ENCODE measurements at regions of chr15 and their contacts with region 1.

Region 1: GRCh38 chr15:76150971-76151598 is 91.3 kb downstream of the TMEM266 start:
- DNase-seq: peak; percentile 89
- H3K4me3 ChIP-seq: peak overlapping the region in 1 of 2 experiments; percentile 32; a peak in 1 of 4 replicates
- H3K27ac ChIP-seq: no peak overlapping the region; a peak in 1 of 4 replicates
- H3K4me1 ChIP-seq: peaks cover 5 to 6% of the 10 kb centered on the region in 2 experiments; a peak in 1 of 4 replicates
- H3K27me3 ChIP-seq: no peaks in the 10 kb centered on the region; the same call in 1 of the 2 replicates
- CTCF ChIP-seq: peak; percentile 87
- EP300 ChIP-seq: no peak
- RAD21 ChIP-seq: peak; percentile 66

Region 2: GRCh38 chr15:76057332-76058000 is 93.6 kb before region 1 on chr15:
- CTCF ChIA-PET with region 1: interaction called, 322 read pairs
- POLR2A ChIA-PET with region 1: no interaction called
- DNase-seq: peak; percentile 59
- H3K4me3 ChIP-seq: peak overlapping the region in 1 of 2 experiments; percentile 55; a peak in 1 of 4 replicates
- H3K27ac ChIP-seq: no peak overlapping the region
- H3K4me1 ChIP-seq: peaks cover 5 to 11% of the 10 kb centered on the region in 2 experiments; a peak in 3 of 4 replicates
- H3K27me3 ChIP-seq: peaks cover 31% of the 10 kb centered on the region
- CTCF ChIP-seq: peak; percentile 81
- EP300 ChIP-seq: no peak
- RAD21 ChIP-seq: peak; percentile 68

Region 3: GRCh38 chr15:76163475-76163881 is 12.4 kb after region 1 on chr15:
- CTCF ChIA-PET with region 1: interaction called, 279 read pairs
- POLR2A ChIA-PET with region 1: no interaction called
- DNase-seq: peak; percentile 50
- H3K4me3 ChIP-seq: no peak overlapping the region
- H3K27ac ChIP-seq: no peak overlapping the region
- H3K4me1 ChIP-seq: peaks cover 0 to 14% of the 10 kb centered on the region in 2 experiments; a peak in 1 of 4 replicates
- H3K27me3 ChIP-seq: no peaks in the 10 kb centered on the region
- CTCF ChIP-seq: no peak
- EP300 ChIP-seq: no peak
- RAD21 ChIP-seq: no peak

Region 4: DNA sequence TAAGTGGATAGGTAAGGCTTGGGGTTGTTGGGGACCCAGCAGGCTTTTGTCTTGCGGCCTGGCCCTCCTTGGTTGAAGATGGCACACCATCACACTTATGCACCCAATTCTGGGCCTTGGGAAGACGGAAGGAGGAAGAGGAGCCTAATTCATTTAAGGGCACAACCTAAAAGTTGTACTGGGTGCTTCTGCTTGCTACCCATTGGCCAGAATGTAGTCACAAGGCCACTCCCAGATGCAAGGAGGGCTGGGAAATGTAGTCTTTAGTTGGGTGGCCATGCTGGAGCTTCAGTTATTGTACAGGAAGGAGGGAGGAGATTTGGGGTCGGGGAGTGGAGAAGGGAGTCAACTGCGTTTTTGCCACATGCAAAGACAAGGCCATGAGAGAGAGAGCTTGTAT is 17.9 kb after region 1 on chr15:
- CTCF ChIA-PET with region 1: interaction called, 279 read pairs
- POLR2A ChIA-PET with region 1: no interaction called
- DNase-seq: no peak
- H3K4me3 ChIP-seq: no peak overlapping the region
- H3K27ac ChIP-seq: no peak overlapping the region
- H3K4me1 ChIP-seq: no peaks in the 10 kb centered on the region
- H3K27me3 ChIP-seq: no peaks in the 10 kb centered on the region
- CTCF ChIP-seq: no peak
- EP300 ChIP-seq: no peak
- RAD21 ChIP-seq: no peak

Region 5: GRCh38 chr15:76176059-76176458 is 25.0 kb after region 1 on chr15:
- CTCF ChIA-PET with region 1: interaction called, 11 read pairs
- POLR2A ChIA-PET with region 1: no interaction called
- DNase-seq: no peak
- H3K4me3 ChIP-seq: no peak overlapping the region
- H3K27ac ChIP-seq: no peak overlapping the region
- H3K4me1 ChIP-seq: no peaks in the 10 kb centered on the region; a peak in 1 of 4 replicates
- H3K27me3 ChIP-seq: no peaks in the 10 kb centered on the region
- CTCF ChIP-seq: no peak
- EP300 ChIP-seq: no peak
- RAD21 ChIP-seq: no peak

Region 6: DNA sequence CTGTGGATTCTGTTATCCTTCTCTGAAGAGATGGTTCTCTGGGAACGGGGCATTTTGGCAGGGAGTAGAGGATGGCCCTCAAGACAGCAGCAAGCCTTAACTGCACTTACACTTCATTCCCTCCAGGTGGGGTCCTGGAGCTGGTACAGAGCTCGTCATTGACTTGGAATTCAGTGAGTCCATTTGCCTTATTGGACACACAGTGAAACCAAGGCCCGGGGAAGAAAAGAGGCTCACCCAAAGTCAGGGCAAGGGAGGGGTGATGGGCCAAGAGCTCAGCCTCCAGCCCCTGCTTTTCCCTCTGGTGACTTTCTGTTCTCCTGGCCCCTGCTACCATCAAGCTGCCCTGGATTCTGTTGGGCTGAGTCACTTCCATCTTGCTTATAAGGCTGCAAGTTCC is 34.6 kb after region 1 on chr15:
- CTCF ChIA-PET with region 1: interaction called, 21 read pairs
- POLR2A ChIA-PET with region 1: no interaction called
- DNase-seq: no peak
- H3K4me3 ChIP-seq: no peak overlapping the region
- H3K27ac ChIP-seq: no peak overlapping the region
- H3K4me1 ChIP-seq: peaks cover 3 to 17% of the 10 kb centered on the region in 2 experiments; a peak in 2 of 4 replicates
- H3K27me3 ChIP-seq: no peaks in the 10 kb centered on the region
- CTCF ChIP-seq: peak; percentile 52
- EP300 ChIP-seq: no peak
- RAD21 ChIP-seq: peak; percentile 44